ENCODE measurements at regions of chr13 and their contacts with region 1.

Region 1: DNA sequence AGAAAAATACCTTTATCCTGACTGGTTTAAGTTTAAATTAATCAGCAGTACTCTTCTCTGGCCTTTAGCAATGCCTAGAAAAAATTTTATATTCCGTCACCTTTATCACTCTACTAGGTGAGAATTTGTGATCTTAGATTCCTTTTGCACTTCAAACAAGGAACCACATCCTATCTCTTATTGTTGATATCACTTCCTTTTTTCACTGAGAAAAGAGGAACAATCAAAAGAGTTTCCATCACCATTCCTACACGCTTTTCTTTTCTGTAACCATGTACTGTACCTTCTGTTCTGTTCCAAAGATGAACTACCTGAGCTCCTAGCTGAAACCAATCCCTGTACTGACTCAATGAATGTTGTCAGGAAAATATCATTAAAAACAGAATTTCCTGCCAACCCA is 1379.0 kb upstream of the MIR17HG start:
- DNase-seq: no peak
- ATAC-seq: no peak
- H3K4me3 ChIP-seq: no peak overlapping the region
- H3K27ac ChIP-seq: no peak overlapping the region
- H3K4me1 ChIP-seq: no peaks in the 10 kb centered on the region
- H3K27me3 ChIP-seq: no peaks in the 10 kb centered on the region
- CTCF ChIP-seq: no peak
- EP300 ChIP-seq: no peak
- POLR2A ChIP-seq: no peak
- RAD21 ChIP-seq: no peak

Region 2: GRCh38 chr13:89856512-89856911 is 112.0 kb before region 1 on chr13:
- CTCF ChIA-PET with region 1: no interaction called
- POLR2A ChIA-PET with region 1: no interaction called
- in situ Hi-C with region 1: loop called (anchors 5 kb)
- intact Hi-C with region 1: no loop called
- DNase-seq: no peak
- ATAC-seq: no peak
- H3K4me3 ChIP-seq: no peak overlapping the region
- H3K27ac ChIP-seq: no peak overlapping the region
- H3K4me1 ChIP-seq: no peaks in the 10 kb centered on the region
- H3K27me3 ChIP-seq: no peaks in the 10 kb centered on the region
- CTCF ChIP-seq: no peak
- EP300 ChIP-seq: no peak
- POLR2A ChIP-seq: no peak
- RAD21 ChIP-seq: no peak

Region 3: DNA sequence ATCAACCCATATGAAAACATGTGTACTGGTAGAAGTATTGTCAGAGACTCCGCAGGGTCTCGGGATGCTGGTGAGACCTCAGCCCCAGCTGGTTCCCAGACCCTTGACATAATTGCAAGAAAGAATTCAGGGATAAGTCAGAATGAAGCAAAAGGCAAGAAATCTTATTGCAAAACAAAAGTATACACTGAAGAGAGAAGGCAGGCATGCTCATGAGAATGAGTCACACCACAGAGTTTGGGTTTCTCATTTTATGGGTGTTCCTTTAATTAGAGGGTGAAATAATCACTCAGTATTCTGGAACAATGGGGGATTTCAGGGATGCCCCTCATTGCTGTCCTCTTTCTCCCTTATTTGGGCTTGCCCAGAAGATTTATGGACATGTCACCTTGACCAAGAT is 44.7 kb before region 1 on chr13:
- CTCF ChIA-PET with region 1: no interaction called
- POLR2A ChIA-PET with region 1: no interaction called
- in situ Hi-C with region 1: no loop called
- intact Hi-C with region 1: loop called (anchors 5 kb)
- DNase-seq: no peak
- ATAC-seq: no peak
- H3K4me3 ChIP-seq: no peak overlapping the region
- H3K27ac ChIP-seq: no peak overlapping the region
- H3K4me1 ChIP-seq: no peaks in the 10 kb centered on the region
- H3K27me3 ChIP-seq: no peaks in the 10 kb centered on the region
- CTCF ChIP-seq: no peak
- EP300 ChIP-seq: no peak
- POLR2A ChIP-seq: no peak
- RAD21 ChIP-seq: no peak

Measured in K562 (cell line).